Caco-2 (cell line): ENCODE measurements at regions of chr7 and their contacts with region 1.

Region 1: GRCh38 chr7:105589356-105590077 is 8.2 kb upstream of the EFCAB10 start:
- DNase-seq: peak; percentile 63 to 66
- H3K4me3 ChIP-seq: no peak overlapping the region
- H3K4me3 Mint-ChIP-seq: no peak overlapping the region
- H3K27ac Mint-ChIP-seq: no peak overlapping the region
- H3K4me1 ChIP-seq: no peaks in the 10 kb centered on the region
- H3K4me1 Mint-ChIP-seq: no peaks in the 10 kb centered on the region
- H3K27me3 ChIP-seq: no peaks in the 10 kb centered on the region
- H3K27me3 Mint-ChIP-seq: no peaks in the 10 kb centered on the region
- CTCF ChIP-seq: peak; percentile 40 to 66

Region 2: DNA sequence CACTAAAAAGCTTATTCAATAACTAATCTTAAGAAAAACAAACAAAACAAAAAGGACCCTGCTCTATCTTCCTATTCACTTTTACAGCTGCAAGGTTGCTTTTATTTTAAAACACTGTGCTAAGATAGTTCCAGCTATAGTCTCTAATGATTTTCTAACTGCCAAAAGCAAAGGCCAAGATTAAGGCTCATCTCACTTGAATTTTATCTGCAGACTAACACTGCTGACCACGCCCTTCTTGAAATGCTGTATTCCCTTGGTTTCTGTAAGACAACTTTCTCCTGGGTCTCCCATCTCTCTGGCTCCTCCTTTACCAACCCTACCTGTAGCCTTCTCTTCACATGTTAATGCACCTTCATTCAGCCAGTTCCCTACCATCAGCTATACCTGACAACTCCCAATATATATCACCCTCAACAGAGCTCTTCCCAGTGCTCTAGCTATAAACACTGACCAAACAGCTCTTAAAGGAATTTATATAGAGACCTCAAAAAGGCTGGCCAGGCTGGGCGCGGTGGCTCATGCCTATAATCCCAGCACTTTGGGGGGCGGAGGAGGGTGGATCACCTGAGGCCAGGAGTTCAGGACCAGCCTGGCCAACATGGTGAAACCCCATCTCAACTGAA is 212.5 kb before region 1 on chr7:
- CTCF ChIA-PET with region 1: interaction called, 15 read pairs
- POLR2A ChIA-PET with region 1: no interaction called
- intact Hi-C with region 1: no loop called
- DNase-seq: no peak
- H3K4me3 ChIP-seq: no peak overlapping the region
- H3K4me3 Mint-ChIP-seq: no peak overlapping the region
- H3K27ac Mint-ChIP-seq: no peak overlapping the region
- H3K4me1 ChIP-seq: peaks cover 4% of the 10 kb centered on the region; the same call in 1 of the 2 replicates
- H3K4me1 Mint-ChIP-seq: peaks cover 25% of the 10 kb centered on the region
- H3K27me3 ChIP-seq: no peaks in the 10 kb centered on the region
- H3K27me3 Mint-ChIP-seq: no peaks in the 10 kb centered on the region
- CTCF ChIP-seq: no peak

Region 3: GRCh38 chr7:105399043-105399725 is 190.3 kb before region 1 on chr7:
- CTCF ChIA-PET with region 1: no interaction called
- POLR2A ChIA-PET with region 1: no interaction called
- intact Hi-C with region 1: loop called (anchors 1 kb)
- DNase-seq: no peak
- H3K4me3 ChIP-seq: no peak overlapping the region
- H3K4me3 Mint-ChIP-seq: no peak overlapping the region
- H3K27ac Mint-ChIP-seq: no peak overlapping the region
- H3K4me1 ChIP-seq: no peaks in the 10 kb centered on the region
- H3K4me1 Mint-ChIP-seq: peaks cover 7% of the 10 kb centered on the region
- H3K27me3 ChIP-seq: no peaks in the 10 kb centered on the region
- H3K27me3 Mint-ChIP-seq: no peaks in the 10 kb centered on the region
- CTCF ChIP-seq: peak in 1 of 2 experiments; percentile 25

Region 4: GRCh38 chr7:105413887-105414437 is 175.6 kb before region 1 on chr7:
- CTCF ChIA-PET with region 1: no interaction called
- POLR2A ChIA-PET with region 1: no interaction called
- intact Hi-C with region 1: no loop called
- DNase-seq: no peak
- H3K4me3 ChIP-seq: no peak overlapping the region
- H3K4me3 Mint-ChIP-seq: no peak overlapping the region
- H3K27ac Mint-ChIP-seq: no peak overlapping the region
- H3K4me1 ChIP-seq: no peaks in the 10 kb centered on the region
- H3K4me1 Mint-ChIP-seq: no peaks in the 10 kb centered on the region
- H3K27me3 ChIP-seq: no peaks in the 10 kb centered on the region
- H3K27me3 Mint-ChIP-seq: no peaks in the 10 kb centered on the region
- CTCF ChIP-seq: no peak

Region 5: GRCh38 chr7:105531792-105532671 is 57.5 kb before region 1 on chr7 and contains the start of gene RINT1:
- CTCF ChIA-PET with region 1: interaction called, 4 read pairs
- POLR2A ChIA-PET with region 1: interaction called, 3 read pairs
- intact Hi-C with region 1: loop called (anchors 2 kb)
- DNase-seq: peak; percentile 92 to 96
- H3K4me3 ChIP-seq: peak within 1 kb of the TSS; percentile 90
- H3K4me3 Mint-ChIP-seq: peak within 1 kb of the TSS; percentile 65
- H3K27ac Mint-ChIP-seq: peak within 1 kb of the TSS; percentile 85
- H3K4me1 ChIP-seq: 0 out of 2 replicates have a peak, but pooled peaks cover 7% of the 10 kb centered on the region
- H3K4me1 Mint-ChIP-seq: peaks cover 7% of the 10 kb centered on the region
- H3K27me3 ChIP-seq: no peaks in the 10 kb centered on the region
- H3K27me3 Mint-ChIP-seq: no peaks in the 10 kb centered on the region
- CTCF ChIP-seq: peak; percentile 70 to 81
- total RNA-seq, gene RINT1: 23.9 and 28.0 TPM in 2 replicates

Region 6: DNA sequence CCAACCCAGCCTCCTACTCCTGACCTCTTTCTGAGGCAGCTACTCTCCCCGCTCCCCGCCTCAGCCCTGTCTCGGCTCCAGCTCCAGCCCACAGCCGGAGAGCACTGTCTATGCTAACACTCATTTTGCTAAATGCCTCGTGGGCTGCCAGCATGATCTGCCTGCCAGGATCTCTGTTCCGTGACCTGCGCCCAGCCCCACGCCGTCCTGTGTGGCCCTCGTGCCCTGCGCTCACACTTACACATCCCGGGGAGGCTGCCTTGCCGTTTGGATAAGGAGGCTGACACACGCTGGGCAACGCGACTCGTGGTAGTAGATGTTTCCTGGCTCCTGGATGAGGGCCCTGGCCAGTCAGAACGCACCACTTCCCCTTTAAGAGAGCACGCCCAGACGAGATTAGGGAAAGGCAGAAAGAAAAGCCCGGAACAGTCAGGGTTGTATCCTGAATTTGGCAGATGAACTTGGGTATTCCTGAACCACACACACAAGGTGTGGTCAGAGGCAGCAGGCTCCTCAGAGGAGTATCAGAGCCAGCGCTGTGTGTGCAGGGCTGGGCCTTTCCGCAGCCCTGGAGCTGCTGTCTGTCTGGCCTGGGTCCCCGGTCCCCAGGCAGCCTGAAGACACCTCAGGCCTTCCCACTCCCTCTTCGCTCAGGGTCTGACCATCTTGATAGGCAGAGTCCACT is 89.4 kb after region 1 on chr7:
- CTCF ChIA-PET with region 1: no interaction called
- POLR2A ChIA-PET with region 1: no interaction called
- intact Hi-C with region 1: no loop called
- DNase-seq: no peak
- H3K4me3 ChIP-seq: no peak overlapping the region
- H3K4me3 Mint-ChIP-seq: no peak overlapping the region
- H3K27ac Mint-ChIP-seq: no peak overlapping the region
- H3K4me1 ChIP-seq: peaks cover 4% of the 10 kb centered on the region; the same call in 1 of the 2 replicates
- H3K4me1 Mint-ChIP-seq: peaks cover 6% of the 10 kb centered on the region
- H3K27me3 ChIP-seq: no peaks in the 10 kb centered on the region
- H3K27me3 Mint-ChIP-seq: no peaks in the 10 kb centered on the region
- CTCF ChIP-seq: no peak

Region 7: GRCh38 chr7:105691733-105692564 is 102.4 kb after region 1 on chr7:
- CTCF ChIA-PET with region 1: no interaction called
- POLR2A ChIA-PET with region 1: no interaction called
- intact Hi-C with region 1: no loop called
- DNase-seq: no peak
- H3K4me3 ChIP-seq: no peak overlapping the region
- H3K4me3 Mint-ChIP-seq: no peak overlapping the region
- H3K27ac Mint-ChIP-seq: no peak overlapping the region
- H3K4me1 ChIP-seq: no peaks in the 10 kb centered on the region
- H3K4me1 Mint-ChIP-seq: peaks cover 7% of the 10 kb centered on the region
- H3K27me3 ChIP-seq: no peaks in the 10 kb centered on the region
- H3K27me3 Mint-ChIP-seq: no peaks in the 10 kb centered on the region
- CTCF ChIP-seq: no peak